Posterior vena cava (tissue), 2 donors: ENCODE measurements at regions of chr7 and their contacts with region 1.

Region 1: DNA sequence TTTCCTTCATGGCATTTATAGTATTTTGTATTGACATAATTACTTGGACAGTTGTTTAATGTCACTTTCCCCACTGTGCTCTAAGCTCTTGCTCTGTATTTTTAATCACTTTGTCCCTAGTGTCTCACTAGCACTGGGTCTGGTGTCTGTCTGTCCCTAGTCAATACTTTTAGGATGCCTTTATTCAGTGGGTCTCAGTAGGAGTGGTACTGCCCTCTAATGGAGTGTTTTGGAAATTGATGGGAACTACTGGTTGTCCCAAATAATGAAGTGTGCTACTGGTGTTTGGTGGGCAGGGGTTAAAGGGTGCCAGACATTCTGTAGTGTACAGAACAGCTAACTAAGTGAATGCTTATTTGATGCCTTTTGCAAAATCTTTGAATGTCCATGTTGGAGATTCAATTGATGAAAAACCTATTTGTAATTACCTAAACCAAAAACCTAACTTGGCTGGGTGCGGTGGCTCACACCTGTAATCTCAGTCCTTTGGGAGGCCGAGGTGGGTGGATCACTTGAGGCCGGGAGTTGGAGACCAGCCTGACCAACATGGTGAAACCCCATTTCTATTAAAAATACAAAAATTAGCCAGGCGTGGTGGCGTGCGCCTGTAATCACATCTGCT is 33.3 kb downstream of the CDK14 start:
- DNase-seq: no peak

Region 2: GRCh38 chr7:90455163-90456030 is 174.0 kb before region 1 on chr7:
- intact Hi-C with region 1: loop called in 1 of 2 experiments (anchors 10 kb)
- DNase-seq: no peak

Region 3: DNA sequence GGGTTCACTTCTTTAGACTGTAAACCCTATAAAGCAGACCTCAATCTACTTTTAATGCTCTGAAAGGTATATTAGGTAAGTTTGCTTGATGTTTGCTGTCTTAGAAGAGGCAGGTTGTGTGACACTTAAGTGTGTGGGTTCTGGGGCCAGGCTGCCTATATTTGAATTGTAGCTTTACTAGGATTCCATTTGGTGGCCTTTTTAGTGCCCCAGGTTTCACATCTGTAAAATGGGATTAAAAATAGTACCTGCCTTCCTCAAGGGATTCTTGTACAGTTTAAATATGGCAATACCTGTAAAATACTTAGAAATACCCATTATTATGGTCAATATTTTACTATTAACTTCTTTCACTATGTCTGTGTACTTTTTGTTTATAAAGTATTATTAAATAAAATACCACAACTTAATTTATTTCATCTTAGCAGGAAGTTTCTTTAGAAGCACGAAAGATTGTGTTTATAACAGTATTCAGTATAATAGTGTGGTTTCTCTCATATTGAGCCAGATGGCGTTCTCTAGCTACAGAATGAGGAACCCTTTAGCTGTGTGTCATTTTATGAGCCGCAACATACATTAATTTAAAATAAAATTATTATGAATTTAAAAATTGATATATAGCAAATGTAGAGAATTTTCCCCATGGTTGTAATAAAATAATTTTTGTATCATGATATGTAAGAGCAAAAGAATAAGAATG is 60.9 kb after region 1 on chr7:
- intact Hi-C with region 1: no loop called
- DNase-seq: no peak